B cell (primary cell): ENCODE measurements at regions of chr4 and their contacts with region 1.

Region 1: GRCh38 chr4:123661080-123661737 is 264.6 kb downstream of the SPRY1 start:
- DNase-seq: peak; percentile 30
- ATAC-seq: no peak
- H3K4me3 ChIP-seq: no peak overlapping the region
- H3K4me3 Mint-ChIP-seq: no peak overlapping the region
- H3K27ac ChIP-seq: no peak overlapping the region
- H3K27ac Mint-ChIP-seq: no peak overlapping the region
- H3K4me1 ChIP-seq: peaks cover 3 to 9% of the 10 kb centered on the region in 2 donors
- H3K4me1 Mint-ChIP-seq: peaks cover 8% of the 10 kb centered on the region
- H3K27me3 ChIP-seq: no peaks in the 10 kb centered on the region
- H3K27me3 Mint-ChIP-seq: peaks cover 17% of the 10 kb centered on the region
- CTCF ChIP-seq: peak; percentile 52

Region 2: GRCh38 chr4:123102897-123103471 is 558.2 kb before region 1 on chr4:
- CTCF ChIA-PET with region 1: interaction called, 13 read pairs
- POLR2A ChIA-PET with region 1: no interaction called
- intact Hi-C with region 1: no loop called
- DNase-seq: peak; percentile 45
- ATAC-seq: no peak
- H3K4me3 ChIP-seq: no peak overlapping the region
- H3K4me3 Mint-ChIP-seq: no peak overlapping the region
- H3K27ac ChIP-seq: no peak overlapping the region
- H3K27ac Mint-ChIP-seq: no peak overlapping the region
- H3K4me1 ChIP-seq: no peaks in the 10 kb centered on the region
- H3K4me1 Mint-ChIP-seq: peaks cover 1% of the 10 kb centered on the region
- H3K27me3 ChIP-seq: no peaks in the 10 kb centered on the region
- H3K27me3 Mint-ChIP-seq: no peaks in the 10 kb centered on the region
- CTCF ChIP-seq: peak; percentile 80

Region 3: GRCh38 chr4:123564758-123565346 is 96.4 kb before region 1 on chr4:
- CTCF ChIA-PET with region 1: interaction called, 33 read pairs
- POLR2A ChIA-PET with region 1: no interaction called
- intact Hi-C with region 1: loop called (anchors 1 kb)
- DNase-seq: peak; percentile 81
- ATAC-seq: peak; percentile 100
- H3K4me3 ChIP-seq: no peak overlapping the region
- H3K4me3 Mint-ChIP-seq: no peak overlapping the region
- H3K27ac ChIP-seq: no peak overlapping the region
- H3K27ac Mint-ChIP-seq: no peak overlapping the region
- H3K4me1 ChIP-seq: peaks cover 3 to 6% of the 10 kb centered on the region in 2 donors
- H3K4me1 Mint-ChIP-seq: peaks cover 2% of the 10 kb centered on the region
- H3K27me3 ChIP-seq: no peaks in the 10 kb centered on the region
- H3K27me3 Mint-ChIP-seq: peaks cover 17% of the 10 kb centered on the region
- CTCF ChIP-seq: peak; percentile 90

Region 4: DNA sequence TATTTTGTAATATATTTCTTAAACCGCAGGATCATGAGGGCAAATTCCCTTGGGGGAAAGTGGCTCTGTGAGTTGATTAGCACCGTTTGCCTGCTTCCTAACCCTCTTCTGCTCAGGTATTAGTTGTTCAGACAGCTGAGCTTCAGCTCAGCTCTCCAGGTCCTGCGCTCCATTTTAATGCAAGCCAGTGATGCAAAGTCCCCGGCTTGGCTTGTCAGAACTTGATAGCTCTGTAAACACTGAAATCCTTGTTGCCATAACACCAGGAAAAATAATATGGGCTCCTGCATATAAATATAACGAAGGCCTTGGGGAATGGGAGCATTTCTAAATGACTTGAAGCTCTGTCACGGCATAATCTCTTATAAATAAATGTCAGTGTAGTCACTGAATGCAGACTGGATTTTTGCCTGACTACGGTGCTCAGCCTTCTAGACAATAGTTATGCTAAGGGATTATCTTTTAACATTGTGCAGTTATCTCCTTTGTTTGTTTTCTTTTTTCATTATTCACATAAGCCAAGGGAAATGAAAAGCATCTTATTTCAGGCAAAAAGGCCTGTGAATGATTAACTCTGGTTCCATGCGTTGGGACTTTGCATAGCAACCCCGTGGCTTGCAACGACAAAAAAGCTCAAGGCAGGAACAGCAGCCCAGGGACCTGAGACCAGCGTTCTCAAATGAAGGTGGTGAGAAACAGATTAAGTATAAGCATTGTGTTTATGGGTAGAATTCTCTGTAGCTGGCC is 11.4 kb before region 1 on chr4:
- CTCF ChIA-PET with region 1: interaction called, 15 read pairs
- POLR2A ChIA-PET with region 1: no interaction called
- intact Hi-C with region 1: no loop called
- DNase-seq: no peak
- ATAC-seq: peak; percentile 24
- H3K4me3 ChIP-seq: no peak overlapping the region
- H3K4me3 Mint-ChIP-seq: no peak overlapping the region
- H3K27ac ChIP-seq: peak overlapping the region in 1 of 2 donors; percentile 17
- H3K27ac Mint-ChIP-seq: no peak overlapping the region
- H3K4me1 ChIP-seq: peaks cover 12 to 17% of the 10 kb centered on the region in 2 donors
- H3K4me1 Mint-ChIP-seq: peaks cover 19% of the 10 kb centered on the region
- H3K27me3 ChIP-seq: no peaks in the 10 kb centered on the region
- H3K27me3 Mint-ChIP-seq: peaks cover 5% of the 10 kb centered on the region
- CTCF ChIP-seq: no peak

Region 5: GRCh38 chr4:123676890-123677229 is 15.7 kb after region 1 on chr4:
- CTCF ChIA-PET with region 1: no interaction called
- POLR2A ChIA-PET with region 1: no interaction called
- intact Hi-C with region 1: no loop called
- DNase-seq: no peak
- ATAC-seq: no peak
- H3K4me3 ChIP-seq: no peak overlapping the region
- H3K4me3 Mint-ChIP-seq: no peak overlapping the region
- H3K27ac ChIP-seq: no peak overlapping the region
- H3K27ac Mint-ChIP-seq: no peak overlapping the region
- H3K4me1 ChIP-seq: peaks cover 0 to 2% of the 10 kb centered on the region in 2 donors
- H3K4me1 Mint-ChIP-seq: peaks cover 2% of the 10 kb centered on the region
- H3K27me3 ChIP-seq: no peaks in the 10 kb centered on the region
- H3K27me3 Mint-ChIP-seq: peaks cover 20% of the 10 kb centered on the region
- CTCF ChIP-seq: no peak